ENCODE measurements at regions of chr9 and their contacts with region 1.

Region 1: GRCh38 chr9:107484117-107484723 is 5.3 kb downstream of the KLF4 start:
- DNase-seq: peak; percentile 64
- ATAC-seq: peak; percentile 63
- H3K4me3 ChIP-seq: no peak overlapping the region
- H3K27ac ChIP-seq: no peak overlapping the region
- H3K4me1 ChIP-seq: peaks cover 13 to 37% of the 10 kb centered on the region in 2 experiments; a peak in 3 of 4 replicates
- H3K27me3 ChIP-seq: no peaks in the 10 kb centered on the region
- CTCF ChIP-seq: peak in 2 of 3 experiments; percentile 44 to 59; a peak in 3 of 6 replicates
- POLR2A ChIP-seq: no peak
- RAD21 ChIP-seq: no peak

Region 2: DNA sequence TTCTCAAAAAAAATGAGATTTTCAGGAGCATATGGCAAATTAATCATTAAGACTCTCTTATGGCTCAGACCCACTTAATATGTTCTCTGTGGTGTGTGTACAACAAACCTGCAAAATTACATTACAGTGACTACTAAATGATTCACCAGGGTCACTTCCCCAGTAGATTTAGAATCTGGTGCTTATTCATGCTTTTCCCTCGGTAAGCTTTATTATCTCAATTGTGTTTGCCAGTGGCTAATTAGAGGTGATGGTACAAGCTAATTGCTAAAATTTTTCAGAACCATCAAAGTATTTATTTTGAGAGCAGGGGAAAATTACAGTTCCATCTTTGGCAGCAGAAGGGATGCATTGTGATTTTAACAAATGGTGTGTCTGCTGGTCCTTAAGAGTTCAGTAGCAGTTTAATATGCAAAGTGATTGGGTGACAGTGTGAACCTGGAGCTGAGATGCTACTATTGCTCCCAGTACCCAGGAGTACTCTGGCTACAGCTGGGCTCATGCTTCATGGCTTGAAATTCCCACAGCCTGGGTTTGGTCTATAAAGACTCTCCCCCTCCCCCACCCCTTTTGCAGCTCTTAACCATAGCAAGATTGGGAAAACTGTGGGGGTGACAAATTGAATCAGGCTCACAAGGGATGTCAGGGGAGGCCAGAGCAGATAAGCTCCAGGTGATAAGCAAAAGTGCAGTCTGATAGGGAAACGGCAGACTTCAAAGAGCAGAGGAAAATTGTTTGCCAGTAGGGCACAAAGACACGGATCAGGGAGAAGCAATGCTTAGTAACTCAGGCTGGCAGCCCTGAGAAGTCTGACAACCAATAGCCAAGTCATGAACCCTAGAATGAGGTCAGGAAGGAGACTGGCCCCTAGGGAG is 293.9 kb before region 1 on chr9:
- CTCF ChIA-PET with region 1: no interaction called
- POLR2A ChIA-PET with region 1: no interaction called
- RAD21 ChIA-PET with region 1: no interaction called
- intact Hi-C with region 1: no loop called
- DNase-seq: no peak
- ATAC-seq: peak; percentile 68
- H3K4me3 ChIP-seq: peak overlapping the region in 1 of 2 experiments; percentile 25; a peak in 2 of 4 replicates
- H3K27ac ChIP-seq: peak overlapping the region; percentile 11
- H3K4me1 ChIP-seq: peaks cover 7 to 32% of the 10 kb centered on the region in 2 experiments; a peak in 3 of 4 replicates
- H3K27me3 ChIP-seq: no peaks in the 10 kb centered on the region
- CTCF ChIP-seq: no peak
- POLR2A ChIP-seq: no peak
- RAD21 ChIP-seq: no peak

Region 3: DNA sequence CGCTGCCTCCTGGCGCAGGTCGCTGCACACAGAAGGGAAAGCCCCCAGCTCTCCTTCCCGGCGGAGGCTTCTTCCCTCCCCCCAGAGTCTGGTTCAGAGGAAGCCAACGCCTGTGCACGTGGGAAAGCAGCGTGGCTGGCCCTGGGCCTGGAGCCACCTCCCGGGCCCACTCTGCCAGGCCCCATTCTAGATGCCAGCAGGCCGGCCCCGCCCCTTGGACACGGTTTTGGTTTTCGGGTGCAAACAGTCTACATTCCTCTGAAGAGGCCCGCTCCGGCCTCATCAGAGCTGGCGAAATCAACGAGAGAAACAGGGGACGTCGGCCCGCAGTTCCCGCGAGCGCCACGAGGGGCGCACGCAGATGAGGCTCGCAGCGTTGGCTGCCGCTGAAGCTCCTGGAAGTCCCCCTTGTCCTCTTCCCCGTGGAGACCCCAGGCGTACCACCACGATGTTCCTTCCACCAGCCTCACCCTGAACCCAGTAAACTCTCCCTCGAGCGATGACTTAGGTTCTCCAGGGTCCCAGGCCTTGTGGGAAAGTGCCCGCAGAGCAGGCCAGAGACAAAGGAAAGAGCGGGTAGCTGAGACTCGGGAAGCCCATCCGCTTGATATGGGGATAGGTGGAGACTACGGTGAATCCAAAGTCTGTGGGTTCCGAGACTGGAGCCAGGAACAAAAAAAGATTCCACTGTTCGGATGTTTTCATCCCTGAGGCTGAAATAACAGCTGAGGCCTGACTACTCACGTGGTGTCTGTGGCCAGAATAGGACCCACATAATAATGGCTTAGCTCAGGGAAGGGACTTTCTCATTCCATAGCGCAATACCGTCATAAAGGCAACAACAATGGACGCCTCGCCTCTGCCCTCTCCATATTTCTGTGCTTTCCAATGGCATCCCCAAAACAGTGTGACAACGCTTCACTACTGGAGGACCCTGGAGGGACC is 58.8 kb before region 1 on chr9:
- CTCF ChIA-PET with region 1: interaction called, 12 read pairs
- POLR2A ChIA-PET with region 1: no interaction called
- RAD21 ChIA-PET with region 1: no interaction called
- intact Hi-C with region 1: no loop called
- DNase-seq: peak; percentile 50
- ATAC-seq: peak; percentile 75
- H3K4me3 ChIP-seq: peak overlapping the region in 1 of 2 experiments; percentile 11; a peak in 1 of 4 replicates
- H3K27ac ChIP-seq: peak overlapping the region; percentile 34
- H3K4me1 ChIP-seq: peaks cover 8 to 19% of the 10 kb centered on the region in 2 experiments; a peak in 3 of 4 replicates
- H3K27me3 ChIP-seq: no peaks in the 10 kb centered on the region
- CTCF ChIP-seq: peak; percentile 54 to 97 (median 97); a peak in 5 of 6 replicates
- POLR2A ChIP-seq: no peak
- RAD21 ChIP-seq: peak; percentile 74

Region 4: DNA sequence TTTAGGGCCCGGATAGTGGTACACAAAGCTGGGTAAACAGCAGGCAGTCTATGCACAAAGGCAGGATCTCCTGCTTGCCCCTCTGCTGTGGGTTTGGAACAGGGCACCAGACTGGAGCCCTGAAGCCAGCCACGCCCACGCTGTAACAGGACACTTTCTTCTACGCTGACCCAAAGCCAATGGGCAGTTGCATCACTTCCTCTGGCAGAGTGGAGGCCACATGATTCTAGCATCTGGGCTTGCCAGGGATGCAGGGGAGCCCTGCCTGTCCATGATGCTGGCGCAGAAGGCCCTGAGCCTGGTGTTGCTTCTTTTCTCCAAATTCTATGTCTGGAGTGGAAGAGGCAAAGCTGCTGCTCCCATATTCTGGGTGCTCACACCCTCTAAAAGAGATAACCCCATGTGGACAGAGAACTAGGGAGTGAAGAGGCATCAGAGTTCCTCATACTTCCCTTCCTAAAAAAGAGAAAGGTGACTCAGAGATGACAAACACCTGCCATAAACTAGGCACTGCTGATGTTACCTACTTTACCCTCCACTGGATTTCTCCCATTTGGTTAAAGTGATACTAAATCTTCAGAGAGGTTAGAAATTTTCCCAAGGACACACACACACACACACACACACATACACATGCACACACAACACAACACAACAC is 265.7 kb after region 1 on chr9:
- CTCF ChIA-PET with region 1: interaction called, 3 read pairs
- POLR2A ChIA-PET with region 1: interaction called, 3 read pairs
- RAD21 ChIA-PET with region 1: no interaction called
- intact Hi-C with region 1: loop called (anchors 1 kb)
- DNase-seq: peak; percentile 85
- ATAC-seq: peak; percentile 86
- H3K4me3 ChIP-seq: peak overlapping the region in 1 of 2 experiments; percentile 39; a peak in 2 of 4 replicates
- H3K27ac ChIP-seq: peak overlapping the region; percentile 88
- H3K4me1 ChIP-seq: peaks cover 44 to 62% of the 10 kb centered on the region in 2 experiments
- H3K27me3 ChIP-seq: no peaks in the 10 kb centered on the region
- CTCF ChIP-seq: no peak
- POLR2A ChIP-seq: peak; percentile 52
- RAD21 ChIP-seq: no peak

Region 5: DNA sequence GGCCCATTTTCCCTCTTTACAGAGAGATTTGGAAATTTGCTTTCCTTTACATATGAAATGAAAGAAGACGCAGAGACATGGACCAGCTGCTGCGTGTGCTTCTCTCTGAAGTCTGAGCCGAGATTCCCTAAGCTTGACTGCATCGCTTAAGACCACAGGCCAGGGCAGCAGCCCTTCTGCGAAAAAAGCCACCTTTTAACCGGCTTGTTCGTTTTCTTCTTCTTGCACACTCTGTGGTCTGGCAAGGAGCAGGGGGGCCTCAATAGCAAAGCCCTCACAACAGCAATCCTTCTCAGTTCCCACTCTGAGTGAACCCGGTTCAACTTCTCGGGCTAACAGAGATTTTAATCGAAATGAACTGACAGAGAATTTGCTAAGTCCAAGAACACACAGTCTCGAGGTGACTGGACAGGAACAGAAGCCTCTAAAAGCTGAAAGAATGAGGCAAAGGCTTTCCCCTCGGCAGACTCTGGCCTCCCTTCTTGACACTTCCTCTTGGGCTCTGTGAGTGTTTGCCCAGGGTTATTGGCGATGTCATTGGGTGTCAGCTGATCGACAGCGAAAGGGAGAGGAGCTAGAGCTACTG is 518.2 kb after region 1 on chr9:
- CTCF ChIA-PET with region 1: no interaction called
- POLR2A ChIA-PET with region 1: interaction called, 8 read pairs
- RAD21 ChIA-PET with region 1: no interaction called
- intact Hi-C with region 1: loop called (anchors 2 kb)
- DNase-seq: peak; percentile 4
- ATAC-seq: no peak
- H3K4me3 ChIP-seq: peak overlapping the region in 1 of 2 experiments; percentile 8; a peak in 2 of 4 replicates
- H3K27ac ChIP-seq: peak overlapping the region; percentile 82
- H3K4me1 ChIP-seq: peaks cover 41 to 63% of the 10 kb centered on the region in 2 experiments
- H3K27me3 ChIP-seq: no peaks in the 10 kb centered on the region
- CTCF ChIP-seq: no peak
- POLR2A ChIP-seq: no peak
- RAD21 ChIP-seq: no peak

Region 6: DNA sequence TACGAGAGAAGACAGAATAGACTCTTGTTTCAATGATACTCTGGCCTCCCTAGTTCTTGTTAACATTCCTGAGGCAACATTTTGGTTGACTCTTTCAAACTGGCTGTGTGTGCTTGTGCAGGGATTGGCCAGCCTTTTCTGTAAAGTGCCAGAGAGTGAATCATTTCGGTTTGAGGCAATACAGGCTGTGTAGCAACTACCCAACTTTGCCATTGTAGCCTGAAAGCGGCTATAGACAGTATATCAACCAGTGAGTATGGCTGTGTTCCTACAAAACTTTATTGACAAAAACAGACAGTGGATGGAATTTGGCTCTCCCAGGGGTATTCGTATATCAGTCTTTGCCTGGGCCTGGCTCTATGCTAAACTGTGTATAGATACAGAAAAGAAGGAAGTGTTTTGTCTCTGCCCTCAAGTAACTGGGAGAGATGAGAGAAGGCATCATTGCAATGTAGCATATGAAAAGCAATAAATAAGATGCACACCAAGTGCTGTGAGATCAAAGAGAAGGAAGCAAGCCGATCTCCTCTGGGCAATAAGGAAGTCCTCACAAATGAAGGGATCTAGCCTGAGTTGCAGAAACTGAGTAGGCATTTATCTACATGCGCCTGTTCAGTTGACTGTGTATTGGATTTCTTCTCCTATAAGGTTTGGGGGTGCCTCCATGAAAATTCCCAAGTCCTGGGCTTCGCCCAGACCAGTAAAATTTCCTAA is 573.4 kb after region 1 on chr9:
- CTCF ChIA-PET with region 1: no interaction called
- POLR2A ChIA-PET with region 1: no interaction called
- RAD21 ChIA-PET with region 1: no interaction called
- intact Hi-C with region 1: loop called (anchors 5 kb)
- DNase-seq: no peak
- ATAC-seq: peak; percentile 74
- H3K4me3 ChIP-seq: peak overlapping the region in 1 of 2 experiments; percentile 31; a peak in 2 of 4 replicates
- H3K27ac ChIP-seq: peak overlapping the region; percentile 11; the same call in 1 of the 2 replicates
- H3K4me1 ChIP-seq: peaks cover 39 to 81% of the 10 kb centered on the region in 2 experiments
- H3K27me3 ChIP-seq: no peaks in the 10 kb centered on the region
- CTCF ChIP-seq: no peak
- POLR2A ChIP-seq: no peak
- RAD21 ChIP-seq: 0 out of 2 replicates have a peak, but pooled peaks have one; percentile 11

Region 7: DNA sequence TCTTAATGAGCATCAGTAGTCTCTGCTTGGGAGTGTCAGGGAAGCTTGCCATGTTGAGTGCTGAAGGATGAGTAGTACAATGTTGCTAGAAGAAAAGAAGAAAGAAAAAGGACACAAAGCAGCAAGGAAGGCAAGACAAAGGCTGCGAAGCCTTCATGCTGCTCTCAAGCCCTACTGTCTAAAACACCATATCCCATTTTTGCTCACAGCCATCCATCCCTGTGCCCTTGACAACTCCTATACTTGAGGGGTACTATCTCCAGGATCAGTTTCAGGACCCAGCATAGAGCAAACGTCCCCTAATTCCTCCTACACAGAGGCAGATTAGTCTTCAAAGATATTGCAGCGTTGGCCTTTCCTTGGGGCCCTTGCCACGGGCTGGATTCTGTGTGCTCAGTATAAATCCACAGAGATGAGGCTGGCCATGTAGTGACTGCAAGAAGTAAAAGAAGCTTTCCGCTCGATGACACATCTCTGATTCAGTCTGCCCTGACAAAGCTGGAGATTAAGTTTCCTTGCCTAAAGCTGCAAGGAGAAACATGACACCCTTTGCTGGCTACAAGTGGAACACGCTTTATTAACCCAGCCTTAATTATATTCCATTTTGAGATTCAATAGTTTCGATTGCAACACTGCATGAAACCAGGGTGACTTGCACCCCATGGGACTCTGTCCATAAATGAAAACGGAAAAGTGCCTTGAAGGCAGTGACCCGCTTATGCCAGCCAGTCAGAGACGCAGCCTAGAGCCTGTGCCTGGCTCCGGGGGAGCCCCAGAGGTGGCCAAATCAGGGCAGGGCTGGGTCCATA is 1067.0 kb after region 1 on chr9:
- CTCF ChIA-PET with region 1: interaction called, 3 read pairs
- POLR2A ChIA-PET with region 1: no interaction called
- RAD21 ChIA-PET with region 1: no interaction called
- intact Hi-C with region 1: loop called (anchors 5 kb)
- DNase-seq: peak; percentile 62
- ATAC-seq: peak; percentile 78
- H3K4me3 ChIP-seq: peak overlapping the region; percentile 10 to 49
- H3K27ac ChIP-seq: peak overlapping the region; percentile 15; the same call in 1 of the 2 replicates
- H3K4me1 ChIP-seq: peaks cover 26 to 53% of the 10 kb centered on the region in 2 experiments
- H3K27me3 ChIP-seq: no peaks in the 10 kb centered on the region
- CTCF ChIP-seq: no peak
- POLR2A ChIP-seq: no peak
- RAD21 ChIP-seq: peak; percentile 38